ENCODE measurements at regions of chr9 and their contacts with region 1.

Region 1: DNA sequence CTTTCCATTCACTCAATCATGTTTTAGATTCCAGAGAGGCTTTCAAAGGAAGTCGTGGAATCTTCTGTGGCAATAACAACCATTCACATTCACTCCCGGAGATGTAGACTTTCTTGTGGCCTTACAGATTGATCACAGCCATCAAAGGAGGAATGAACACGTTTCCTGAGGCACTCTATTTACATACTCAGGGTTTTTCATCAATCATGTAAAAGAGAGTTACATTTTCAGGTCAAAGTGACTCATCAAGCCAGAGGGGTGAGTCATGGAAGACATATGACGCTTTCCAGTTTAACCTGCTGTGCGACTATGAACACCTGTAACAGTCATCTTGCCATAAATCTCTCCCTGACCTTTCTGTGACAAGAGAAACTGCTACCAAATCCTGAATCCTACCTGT is 39.3 kb upstream of the RAD23B start:
- DNase-seq: no peak
- ATAC-seq: peak; percentile 85
- H3K4me3 ChIP-seq: no peak overlapping the region
- H3K27ac ChIP-seq: no peak overlapping the region
- H3K4me1 ChIP-seq: no peaks in the 10 kb centered on the region
- H3K27me3 ChIP-seq: no peaks in the 10 kb centered on the region
- CTCF ChIP-seq: no peak
- EP300 ChIP-seq: no peak; a peak in 1 of 4 replicates
- POLR2A ChIP-seq: no peak
- RAD21 ChIP-seq: no peak

Region 2: DNA sequence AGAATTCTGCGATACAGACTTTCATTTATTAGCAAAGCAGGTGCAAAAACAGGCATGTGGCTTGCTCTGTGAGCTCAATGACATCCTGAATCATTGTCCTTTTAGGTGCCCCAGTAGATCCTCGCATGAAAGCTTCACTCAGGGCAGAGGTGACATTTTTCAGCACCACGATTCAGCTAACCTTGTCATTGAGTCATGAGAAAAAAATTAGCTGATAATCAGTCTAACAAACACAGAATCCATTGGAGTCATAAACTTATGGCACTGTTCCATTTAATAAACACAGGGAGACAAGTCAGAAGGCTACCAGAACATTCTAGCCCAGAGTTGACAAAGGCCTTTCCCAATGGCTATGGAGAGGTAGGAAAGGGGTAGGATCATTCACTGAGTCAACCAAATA is 65.5 kb before region 1 on chr9:
- CTCF ChIA-PET with region 1: interaction called, 5 read pairs
- POLR2A ChIA-PET with region 1: interaction called, 5 read pairs
- RAD21 ChIA-PET with region 1: interaction called, 29 read pairs
- SMC1A ChIA-PET with region 1: interaction called, 14 read pairs
- in situ Hi-C with region 1: no loop called
- intact Hi-C with region 1: no loop called
- DNase-seq: no peak
- ATAC-seq: no peak
- H3K4me3 ChIP-seq: no peak overlapping the region
- H3K27ac ChIP-seq: no peak overlapping the region
- H3K4me1 ChIP-seq: peaks cover 13% of the 10 kb centered on the region
- H3K27me3 ChIP-seq: no peaks in the 10 kb centered on the region
- CTCF ChIP-seq: no peak
- EP300 ChIP-seq: no peak
- POLR2A ChIP-seq: no peak
- RAD21 ChIP-seq: no peak

Region 3: GRCh38 chr9:107218829-107219485 is 24.8 kb before region 1 on chr9:
- CTCF ChIA-PET with region 1: interaction called, 19 read pairs
- POLR2A ChIA-PET with region 1: no interaction called
- RAD21 ChIA-PET with region 1: interaction called, 41 read pairs
- SMC1A ChIA-PET with region 1: interaction called, 187 read pairs
- in situ Hi-C with region 1: no loop called
- intact Hi-C with region 1: no loop called
- DNase-seq: peak; percentile 53
- ATAC-seq: peak; percentile 85
- H3K4me3 ChIP-seq: no peak overlapping the region
- H3K27ac ChIP-seq: peak overlapping the region; percentile 31; the same call in 1 of the 2 replicates
- H3K4me1 ChIP-seq: peaks cover 14% of the 10 kb centered on the region; the same call in 1 of the 2 replicates
- H3K27me3 ChIP-seq: no peaks in the 10 kb centered on the region
- CTCF ChIP-seq: no peak
- EP300 ChIP-seq: peak; percentile 49 to 83; a peak in 3 of 4 replicates
- POLR2A ChIP-seq: no peak
- RAD21 ChIP-seq: no peak

Region 4: DNA sequence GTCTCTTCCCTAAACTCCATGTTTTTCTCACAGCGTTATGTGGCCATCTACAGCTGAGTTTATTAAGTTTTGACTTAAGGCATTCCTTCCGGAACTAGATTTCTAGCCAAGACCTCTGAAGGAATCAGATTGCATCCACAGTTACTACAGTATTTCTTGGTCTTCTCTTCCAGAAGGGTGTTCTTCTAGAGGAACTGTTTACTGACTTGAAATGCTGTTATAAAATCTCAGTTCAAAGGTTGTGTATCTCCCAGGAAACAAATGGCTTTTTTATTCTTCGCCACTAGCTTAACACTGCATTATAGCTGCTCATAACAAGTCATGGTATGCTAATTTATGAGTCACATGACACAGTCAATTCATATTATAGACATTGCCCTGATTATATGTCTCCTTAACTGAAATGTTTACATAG is 16.0 kb before region 1 on chr9:
- CTCF ChIA-PET with region 1: interaction called, 19 read pairs
- POLR2A ChIA-PET with region 1: interaction called, 5 read pairs
- RAD21 ChIA-PET with region 1: interaction called, 41 read pairs
- SMC1A ChIA-PET with region 1: interaction called, 187 read pairs
- in situ Hi-C with region 1: no loop called
- intact Hi-C with region 1: no loop called
- DNase-seq: no peak
- ATAC-seq: no peak
- H3K4me3 ChIP-seq: no peak overlapping the region
- H3K27ac ChIP-seq: no peak overlapping the region
- H3K4me1 ChIP-seq: no peaks in the 10 kb centered on the region
- H3K27me3 ChIP-seq: no peaks in the 10 kb centered on the region; a peak in 2 of 4 replicates
- CTCF ChIP-seq: no peak
- EP300 ChIP-seq: no peak
- POLR2A ChIP-seq: no peak
- RAD21 ChIP-seq: no peak

Region 5: DNA sequence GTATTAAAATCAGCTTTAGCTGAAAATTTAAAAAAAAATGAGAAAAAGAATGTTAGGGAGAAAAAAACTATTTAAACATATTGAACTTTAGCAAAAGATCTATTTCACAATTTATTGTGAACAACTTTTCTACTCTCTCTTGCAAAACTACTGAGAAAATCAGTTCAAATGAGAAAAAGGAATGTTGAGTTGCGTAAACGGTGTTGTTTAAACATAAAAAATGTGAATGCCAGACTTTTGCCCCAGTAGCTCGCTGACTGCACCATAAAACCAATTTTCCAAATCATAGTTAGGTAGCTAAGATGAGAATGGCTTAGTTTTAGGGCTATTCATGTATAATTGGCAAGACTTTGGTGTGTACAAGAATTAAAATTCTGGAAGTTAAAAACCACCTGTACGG is 25.9 kb after region 1 on chr9:
- CTCF ChIA-PET with region 1: interaction called, 5 read pairs
- POLR2A ChIA-PET with region 1: interaction called, 5 read pairs
- RAD21 ChIA-PET with region 1: interaction called, 5 read pairs
- SMC1A ChIA-PET with region 1: interaction called, 23 read pairs
- in situ Hi-C with region 1: no loop called
- intact Hi-C with region 1: no loop called
- DNase-seq: no peak
- ATAC-seq: no peak
- H3K4me3 ChIP-seq: no peak overlapping the region
- H3K27ac ChIP-seq: no peak overlapping the region
- H3K4me1 ChIP-seq: no peaks in the 10 kb centered on the region; the same call in 1 of the 2 replicates
- H3K27me3 ChIP-seq: no peaks in the 10 kb centered on the region
- CTCF ChIP-seq: no peak
- EP300 ChIP-seq: no peak
- POLR2A ChIP-seq: no peak
- RAD21 ChIP-seq: no peak

Region 6: GRCh38 chr9:107282753-107283625 is 39.2 kb after region 1 on chr9 and contains the start of gene RAD23B:
- CTCF ChIA-PET with region 1: interaction called, 17 read pairs
- POLR2A ChIA-PET with region 1: interaction called, 4 read pairs
- RAD21 ChIA-PET with region 1: interaction called, 34 read pairs
- SMC1A ChIA-PET with region 1: interaction called, 11 read pairs
- in situ Hi-C with region 1: no loop called
- intact Hi-C with region 1: loop called (anchors 2 kb)
- DNase-seq: peak; percentile 88
- ATAC-seq: peak; percentile 89
- H3K4me3 ChIP-seq: peak within 1 kb of the TSS; percentile 82
- H3K27ac ChIP-seq: peak within 1 kb of the TSS; percentile 92
- H3K4me1 ChIP-seq: peaks cover 8% of the 10 kb centered on the region; the same call in 1 of the 2 replicates
- H3K27me3 ChIP-seq: no peaks in the 10 kb centered on the region
- CTCF ChIP-seq: no peak
- EP300 ChIP-seq: no peak
- POLR2A ChIP-seq: peak; percentile 93
- RAD21 ChIP-seq: no peak
- polyA plus RNA-seq, gene RAD23B: 24.1 to 26.4 TPM

Region 7: DNA sequence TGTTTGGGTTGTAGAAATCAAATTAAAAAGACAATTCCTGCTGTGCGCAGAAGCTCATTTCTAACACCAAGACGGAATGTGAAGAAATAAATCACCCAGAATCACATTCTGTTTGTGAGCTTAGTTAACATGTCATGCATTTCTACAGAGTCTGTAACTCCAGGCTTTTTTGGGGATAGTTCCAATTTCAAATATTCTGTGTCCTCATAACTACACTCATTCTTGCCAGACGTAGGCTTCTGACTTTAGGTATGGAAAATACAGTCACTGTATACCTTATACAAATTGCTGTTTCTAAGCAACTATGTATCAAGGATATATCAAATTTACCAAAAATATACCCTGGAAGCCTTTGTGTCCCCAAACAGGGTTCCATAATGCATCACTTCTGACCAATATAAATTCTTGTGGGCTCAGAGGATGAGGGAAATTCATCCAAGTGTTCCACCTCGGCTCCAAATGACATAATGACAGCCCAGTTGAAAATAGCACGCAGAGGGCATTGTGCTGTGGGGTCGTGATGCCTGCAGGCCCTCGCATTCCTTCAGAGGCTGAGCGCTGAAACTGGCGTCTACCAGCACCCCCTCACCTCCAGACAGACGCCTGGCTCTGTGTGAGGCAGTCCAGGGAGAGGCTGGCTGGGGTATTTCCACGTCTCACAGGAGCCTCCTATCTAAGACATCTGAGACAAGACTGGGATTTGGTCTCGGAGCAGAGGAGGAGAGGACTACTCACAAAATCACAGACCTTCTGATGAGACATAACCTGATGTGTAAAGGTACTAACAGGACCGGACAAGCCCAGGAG is 166.0 kb after region 1 on chr9:
- CTCF ChIA-PET with region 1: no interaction called
- POLR2A ChIA-PET with region 1: no interaction called
- RAD21 ChIA-PET with region 1: no interaction called
- SMC1A ChIA-PET with region 1: no interaction called
- in situ Hi-C with region 1: no loop called
- intact Hi-C with region 1: loop called (anchors 5 kb)
- DNase-seq: no peak
- ATAC-seq: no peak
- H3K4me3 ChIP-seq: no peak overlapping the region
- H3K27ac ChIP-seq: no peak overlapping the region
- H3K4me1 ChIP-seq: no peaks in the 10 kb centered on the region
- H3K27me3 ChIP-seq: no peaks in the 10 kb centered on the region; a peak in 1 of 4 replicates
- CTCF ChIP-seq: no peak
- EP300 ChIP-seq: no peak
- POLR2A ChIP-seq: no peak
- RAD21 ChIP-seq: no peak

Region 8: GRCh38 chr9:107438211-107439090 is 194.7 kb after region 1 on chr9:
- CTCF ChIA-PET with region 1: no interaction called
- POLR2A ChIA-PET with region 1: no interaction called
- RAD21 ChIA-PET with region 1: no interaction called
- SMC1A ChIA-PET with region 1: no interaction called
- in situ Hi-C with region 1: no loop called
- intact Hi-C with region 1: no loop called
- DNase-seq: no peak
- ATAC-seq: no peak
- H3K4me3 ChIP-seq: no peak overlapping the region
- H3K27ac ChIP-seq: no peak overlapping the region
- H3K4me1 ChIP-seq: no peaks in the 10 kb centered on the region
- H3K27me3 ChIP-seq: no peaks in the 10 kb centered on the region
- CTCF ChIP-seq: no peak
- EP300 ChIP-seq: no peak
- POLR2A ChIP-seq: no peak
- RAD21 ChIP-seq: no peak

Region 9: DNA sequence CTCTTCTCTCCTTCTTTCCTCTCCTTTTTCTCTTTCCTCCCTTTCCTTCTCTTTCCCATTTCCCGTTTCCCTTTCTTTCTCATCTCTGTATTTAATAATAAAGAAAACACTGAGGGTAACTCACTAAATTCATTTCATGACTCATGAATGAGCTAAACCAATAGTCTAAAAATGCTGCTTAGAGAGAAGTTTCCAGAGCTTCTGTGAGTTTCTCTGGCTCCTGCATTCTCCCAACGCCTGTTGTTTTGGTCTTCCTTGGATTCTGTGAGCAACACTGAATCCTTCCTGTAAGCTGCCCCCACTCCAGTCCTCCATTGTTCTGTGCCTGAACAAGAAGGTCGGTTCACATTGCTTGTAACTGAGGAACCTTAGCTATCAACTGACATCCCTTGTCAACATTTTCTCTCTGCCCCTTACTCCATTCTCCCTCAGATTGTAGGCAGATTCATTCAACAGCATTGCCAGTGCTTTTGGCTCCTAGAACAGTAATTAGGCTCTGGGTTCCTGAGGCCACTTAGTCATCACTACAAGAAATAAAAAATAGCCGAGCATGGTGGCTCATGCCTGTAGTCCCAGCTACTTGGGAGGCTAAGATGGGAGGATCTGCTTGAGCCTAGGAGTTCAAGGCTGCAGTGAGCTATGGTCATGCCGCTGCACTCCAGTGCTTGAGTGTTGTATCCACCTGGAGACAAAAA is 483.5 kb after region 1 on chr9:
- CTCF ChIA-PET with region 1: no interaction called
- POLR2A ChIA-PET with region 1: no interaction called
- RAD21 ChIA-PET with region 1: no interaction called
- SMC1A ChIA-PET with region 1: no interaction called
- in situ Hi-C with region 1: no loop called
- intact Hi-C with region 1: no loop called
- DNase-seq: no peak
- ATAC-seq: no peak
- H3K4me3 ChIP-seq: no peak overlapping the region
- H3K27ac ChIP-seq: no peak overlapping the region
- H3K4me1 ChIP-seq: no peaks in the 10 kb centered on the region
- H3K27me3 ChIP-seq: no peaks in the 10 kb centered on the region
- CTCF ChIP-seq: no peak
- EP300 ChIP-seq: no peak
- POLR2A ChIP-seq: no peak
- RAD21 ChIP-seq: no peak

Region 10: GRCh38 chr9:108125625-108126024 is 881.9 kb after region 1 on chr9:
- CTCF ChIA-PET with region 1: no interaction called
- POLR2A ChIA-PET with region 1: no interaction called
- RAD21 ChIA-PET with region 1: no interaction called
- SMC1A ChIA-PET with region 1: no interaction called
- in situ Hi-C with region 1: no loop called
- intact Hi-C with region 1: no loop called
- DNase-seq: no peak
- ATAC-seq: no peak
- H3K4me3 ChIP-seq: no peak overlapping the region
- H3K27ac ChIP-seq: no peak overlapping the region
- H3K4me1 ChIP-seq: no peaks in the 10 kb centered on the region
- H3K27me3 ChIP-seq: no peaks in the 10 kb centered on the region
- CTCF ChIP-seq: peak; percentile 2 to 33 (median 30); a peak in 3 of 6 replicates
- EP300 ChIP-seq: no peak
- POLR2A ChIP-seq: no peak
- RAD21 ChIP-seq: no peak